Activated naive CD4-positive, alpha-beta T cell treated with anti-CD3 and anti-CD28 coated beads for 36 hours (primary cell): ENCODE measurements at regions of chr9 and their contacts with region 1.

Region 1: DNA sequence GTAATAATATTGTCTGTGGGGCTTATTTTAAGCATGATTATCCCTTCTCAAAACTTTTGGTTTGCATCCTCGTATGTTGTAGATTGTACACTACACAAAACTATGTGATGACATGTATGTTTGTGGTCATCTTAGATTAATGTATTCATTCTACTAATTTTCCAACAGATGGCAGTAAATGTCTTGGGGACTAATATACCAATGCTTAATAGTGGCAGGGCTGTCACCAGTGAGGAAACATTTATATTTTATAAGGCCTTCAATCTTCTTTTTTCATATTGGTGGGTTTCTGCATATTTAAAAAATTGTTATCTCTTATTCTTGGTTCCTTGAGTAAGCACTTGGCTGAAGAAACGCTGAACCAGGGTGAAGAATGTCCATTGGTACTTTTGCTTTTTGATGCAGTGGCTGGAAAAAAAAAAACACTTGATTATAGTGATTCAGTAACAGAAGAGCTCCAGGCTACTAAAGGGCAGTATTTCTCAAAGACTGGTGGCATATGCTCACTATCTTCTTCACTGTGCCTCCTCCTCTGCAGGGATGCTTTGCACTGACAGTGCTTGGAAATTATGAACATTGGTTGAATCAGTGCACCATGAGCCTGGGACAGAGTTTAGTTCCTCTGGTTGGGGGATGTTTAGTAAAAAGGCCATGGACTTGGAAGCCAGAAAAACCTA is 530.3 kb downstream of the RASEF start:
- DNase-seq: no peak
- H3K4me3 Mint-ChIP-seq: no peak overlapping the region
- H3K27ac Mint-ChIP-seq: no peak overlapping the region
- H3K4me1 Mint-ChIP-seq: no peaks in the 10 kb centered on the region
- H3K27me3 Mint-ChIP-seq: no peaks in the 10 kb centered on the region

Region 2: DNA sequence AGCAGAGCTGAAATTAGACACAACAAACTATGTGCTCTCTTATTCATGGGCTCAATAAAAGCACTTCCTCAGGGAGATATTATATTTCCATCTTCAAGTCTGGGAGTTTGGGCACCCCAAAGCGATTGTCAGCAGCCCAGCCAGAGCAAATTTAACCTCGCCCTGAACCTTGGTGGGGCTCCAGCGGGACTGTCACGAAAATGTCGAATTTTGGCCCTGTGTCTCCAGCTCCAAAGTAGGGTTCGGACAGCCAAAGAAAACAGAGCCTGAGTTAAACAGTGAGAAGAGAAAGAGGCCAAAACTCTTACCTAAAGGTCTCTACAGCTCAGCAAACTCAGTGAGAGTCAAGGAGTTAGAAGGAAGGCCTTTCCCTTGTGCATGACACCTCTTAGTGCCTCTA is 111.1 kb before region 1 on chr9:
- CTCF ChIA-PET with region 1: no interaction called
- intact Hi-C with region 1: no loop called
- DNase-seq: no peak
- H3K4me3 Mint-ChIP-seq: no peak overlapping the region
- H3K27ac Mint-ChIP-seq: no peak overlapping the region
- H3K4me1 Mint-ChIP-seq: no peaks in the 10 kb centered on the region
- H3K27me3 Mint-ChIP-seq: no peaks in the 10 kb centered on the region

Region 3: GRCh38 chr9:82436480-82436879 is 96.2 kb before region 1 on chr9:
- CTCF ChIA-PET with region 1: no interaction called
- intact Hi-C with region 1: no loop called
- DNase-seq: no peak
- H3K4me3 Mint-ChIP-seq: no peak overlapping the region
- H3K27ac Mint-ChIP-seq: no peak overlapping the region
- H3K4me1 Mint-ChIP-seq: no peaks in the 10 kb centered on the region
- H3K27me3 Mint-ChIP-seq: no peaks in the 10 kb centered on the region

Region 4: DNA sequence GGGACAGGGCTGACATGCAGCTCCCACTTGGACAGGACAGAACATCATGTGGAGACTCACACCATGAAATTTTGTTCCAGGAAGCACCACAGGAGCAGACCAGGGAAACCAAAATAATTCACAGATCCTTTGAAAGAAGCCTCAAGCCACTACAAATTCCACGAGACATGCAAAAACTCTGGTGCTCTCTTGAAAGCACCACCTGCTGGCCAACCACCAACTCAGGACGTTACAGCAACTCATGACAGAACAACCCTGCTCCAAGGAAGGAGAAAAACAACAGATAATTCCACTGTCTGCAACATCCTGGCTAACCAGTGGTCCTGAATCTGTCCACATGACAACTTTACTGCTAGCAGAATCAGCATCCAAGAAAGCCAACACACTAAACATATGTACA is 28.0 kb before region 1 on chr9:
- CTCF ChIA-PET with region 1: no interaction called
- intact Hi-C with region 1: no loop called
- DNase-seq: no peak
- H3K4me3 Mint-ChIP-seq: no peak overlapping the region
- H3K27ac Mint-ChIP-seq: no peak overlapping the region
- H3K4me1 Mint-ChIP-seq: no peaks in the 10 kb centered on the region
- H3K27me3 Mint-ChIP-seq: no peaks in the 10 kb centered on the region

Region 5: DNA sequence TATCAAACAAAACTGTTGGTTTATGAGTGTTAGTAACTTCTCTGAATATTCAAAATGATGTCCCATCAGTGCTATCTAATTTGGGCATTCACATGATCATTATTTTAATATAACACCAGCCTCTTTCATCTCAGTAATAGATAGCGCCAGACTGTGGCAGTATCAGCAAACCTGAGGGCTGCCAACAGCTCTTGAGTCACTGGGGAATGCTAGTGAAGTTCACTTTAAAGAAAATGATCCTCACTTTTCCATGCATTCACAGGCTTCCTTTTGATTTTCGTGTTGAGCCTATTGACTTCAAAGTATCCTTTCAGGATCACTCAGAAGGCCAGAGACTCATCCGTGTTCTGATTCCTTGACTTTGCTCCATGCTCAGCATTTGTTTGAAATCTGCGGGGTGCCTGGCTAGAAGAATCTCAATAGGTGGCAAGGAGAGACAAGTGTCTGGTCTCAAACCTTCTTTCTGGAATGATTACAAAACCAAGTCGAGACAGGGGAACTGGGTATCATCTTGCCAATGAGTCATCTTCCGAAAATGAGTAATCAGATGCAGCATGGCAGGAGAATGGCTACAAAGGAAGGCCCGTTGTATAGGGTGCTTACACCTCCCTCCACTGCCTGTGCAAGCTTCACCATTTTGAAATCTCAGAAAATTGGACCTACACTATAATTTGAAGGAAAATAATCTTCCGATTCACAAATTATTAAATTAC is 21.2 kb after region 1 on chr9:
- CTCF ChIA-PET with region 1: no interaction called
- intact Hi-C with region 1: loop called (anchors 2 kb)
- DNase-seq: no peak
- H3K4me3 Mint-ChIP-seq: no peak overlapping the region
- H3K27ac Mint-ChIP-seq: no peak overlapping the region
- H3K4me1 Mint-ChIP-seq: no peaks in the 10 kb centered on the region
- H3K27me3 Mint-ChIP-seq: peaks cover under 1% of the 10 kb centered on the region

Region 6: DNA sequence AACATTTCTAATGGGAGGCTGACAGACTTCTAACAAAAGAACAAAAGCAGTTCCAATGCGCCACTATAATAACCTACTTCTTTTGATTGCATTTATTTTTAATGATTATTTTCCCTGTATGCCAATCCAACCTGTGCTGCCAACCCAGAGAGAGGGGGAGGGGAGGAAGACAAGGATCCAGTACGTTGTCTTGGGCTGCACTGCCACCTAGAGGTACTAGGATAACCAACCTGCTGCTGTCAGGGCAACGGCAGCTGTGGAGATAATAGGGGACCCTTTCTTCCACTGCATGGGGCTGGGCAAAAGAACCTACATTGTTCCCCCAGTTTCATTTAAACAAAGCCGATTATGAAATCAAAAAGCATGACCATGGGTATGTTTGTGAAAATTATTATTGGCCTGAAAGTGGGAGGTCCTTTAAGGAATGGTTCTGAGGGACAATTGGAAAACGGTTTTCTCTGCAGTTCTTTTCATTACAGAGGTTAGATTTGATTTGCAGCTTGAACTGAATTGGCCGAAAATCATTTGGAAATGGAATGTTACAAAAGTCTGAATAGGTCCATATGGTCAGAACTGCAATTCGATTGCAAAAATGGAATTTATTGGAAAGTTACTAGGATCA is 429.0 kb after region 1 on chr9:
- CTCF ChIA-PET with region 1: no interaction called
- intact Hi-C with region 1: loop called (anchors 2 kb)
- DNase-seq: peak; percentile 73
- H3K4me3 Mint-ChIP-seq: no peak overlapping the region
- H3K27ac Mint-ChIP-seq: no peak overlapping the region
- H3K4me1 Mint-ChIP-seq: no peaks in the 10 kb centered on the region
- H3K27me3 Mint-ChIP-seq: no peaks in the 10 kb centered on the region